ENCODE measurements at regions of chr12 and their contacts with region 1.

Region 1: GRCh38 chr12:57063991-57064685 is 14.2 kb upstream of the MYO1A start:
- DNase-seq: no peak
- H3K4me3 ChIP-seq: no peak overlapping the region
- H3K27ac ChIP-seq: peak overlapping the region in 1 of 2 experiments; percentile 10; a peak in 1 of 4 replicates
- H3K4me1 ChIP-seq: peaks cover 0 to 7% of the 10 kb centered on the region in 2 experiments; a peak in 1 of 4 replicates
- H3K27me3 ChIP-seq: no peaks in the 10 kb centered on the region
- CTCF ChIP-seq: no peak
- EP300 ChIP-seq: no peak
- RAD21 ChIP-seq: no peak

Region 2: GRCh38 chr12:57005980-57006808 is 57.9 kb before region 1 on chr12 and contains the start of gene ZBTB39:
- CTCF ChIA-PET with region 1: interaction called, 257 read pairs
- POLR2A ChIA-PET with region 1: interaction called, 3 read pairs
- DNase-seq: peak; percentile 99
- H3K4me3 ChIP-seq: peak within 1 kb of the TSS; percentile 89 to 100
- H3K27ac ChIP-seq: peak within 1 kb of the TSS; percentile 34 to 69; a peak in 2 of 4 replicates
- H3K4me1 ChIP-seq: peaks cover 6 to 14% of the 10 kb centered on the region in 2 experiments; a peak in 3 of 4 replicates
- H3K27me3 ChIP-seq: no peaks in the 10 kb centered on the region
- CTCF ChIP-seq: peak; percentile 69
- EP300 ChIP-seq: no peak
- RAD21 ChIP-seq: no peak
- polyA plus RNA-seq, gene ZBTB39: 3.7 and 4.8 TPM in 2 replicates

Region 3: DNA sequence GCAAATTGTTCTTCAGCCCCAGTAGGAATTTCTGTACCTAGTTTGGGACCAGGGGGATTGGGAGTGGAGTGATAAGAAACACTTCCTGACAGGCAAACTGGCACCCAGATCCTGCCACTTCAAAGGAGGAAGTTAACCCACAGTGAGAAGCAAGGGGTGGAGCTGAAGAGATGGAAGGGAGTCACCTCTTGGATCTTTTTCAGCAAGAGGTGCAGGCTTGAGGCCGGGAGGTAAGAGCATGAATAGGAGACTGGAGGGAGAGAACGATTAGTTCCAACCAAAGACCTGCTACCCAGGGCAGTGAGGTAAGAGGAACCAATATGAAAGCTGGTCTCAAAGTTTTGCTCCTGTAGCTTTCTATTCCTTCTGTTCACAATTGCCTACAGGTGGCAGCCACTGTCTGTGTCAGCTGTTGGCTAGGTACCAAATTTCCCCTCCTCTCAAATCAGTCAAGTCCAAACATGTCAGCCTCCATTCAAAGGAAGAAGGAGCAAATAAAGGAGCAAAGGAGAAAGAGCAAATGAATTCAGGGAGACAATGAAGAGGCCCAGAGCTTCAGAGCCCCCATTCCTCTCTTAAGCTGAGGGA is 32.9 kb before region 1 on chr12:
- CTCF ChIA-PET with region 1: interaction called, 20 read pairs
- POLR2A ChIA-PET with region 1: no interaction called
- DNase-seq: no peak
- H3K4me3 ChIP-seq: no peak overlapping the region
- H3K27ac ChIP-seq: no peak overlapping the region
- H3K4me1 ChIP-seq: peaks cover 0 to 48% of the 10 kb centered on the region in 2 experiments; a peak in 2 of 4 replicates
- H3K27me3 ChIP-seq: peaks cover 5% of the 10 kb centered on the region; the same call in 1 of the 2 replicates
- CTCF ChIP-seq: no peak
- EP300 ChIP-seq: no peak
- RAD21 ChIP-seq: peak; percentile 43

Region 4: DNA sequence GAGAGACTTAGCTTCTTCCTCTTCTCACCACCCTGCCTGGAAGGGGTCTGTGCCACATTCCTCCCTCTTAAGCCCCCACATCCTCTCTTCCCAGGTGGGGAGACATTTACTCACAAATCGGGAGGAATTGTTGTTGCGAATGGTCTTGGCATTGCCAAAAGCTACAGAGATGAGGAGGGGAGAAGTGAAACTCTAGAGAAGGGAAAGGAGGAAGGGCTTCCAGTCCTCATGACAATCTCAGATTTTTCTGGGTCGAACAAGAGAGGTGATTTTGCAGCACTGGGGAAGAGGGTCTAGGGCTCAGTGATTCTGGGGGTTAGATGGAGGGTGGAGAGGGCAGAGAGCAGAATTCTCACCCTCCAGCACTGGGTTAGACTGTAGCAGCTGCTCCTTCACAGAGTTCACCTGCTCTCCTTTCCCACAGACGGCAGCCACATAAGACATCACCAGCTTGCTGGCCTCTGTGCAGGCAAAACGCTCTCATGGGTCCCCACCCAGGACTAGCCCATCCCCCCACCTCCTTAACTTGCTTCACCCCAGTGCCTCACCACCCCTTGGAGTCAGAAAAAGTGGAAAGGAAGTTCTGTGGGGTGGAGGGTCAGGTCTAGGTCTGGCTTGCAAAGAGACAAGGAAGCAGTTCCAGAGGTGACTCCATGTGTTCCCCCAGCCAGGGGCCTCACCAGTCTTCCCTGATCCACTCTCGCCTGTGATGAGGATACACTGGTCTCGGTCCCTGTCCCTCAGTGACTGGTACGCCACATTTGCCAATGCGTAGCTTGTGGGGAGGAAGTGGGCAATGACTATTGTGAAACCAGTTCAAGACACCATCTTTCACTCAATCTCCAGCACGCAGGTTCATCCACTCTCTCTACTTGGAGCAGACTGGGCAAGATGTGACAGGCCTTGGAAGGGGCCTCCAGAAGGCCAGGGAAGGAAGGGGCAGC is 16.9 kb before region 1 on chr12:
- CTCF ChIA-PET with region 1: interaction called, 81 read pairs
- POLR2A ChIA-PET with region 1: no interaction called
- DNase-seq: no peak
- H3K4me3 ChIP-seq: no peak overlapping the region
- H3K27ac ChIP-seq: no peak overlapping the region
- H3K4me1 ChIP-seq: no peaks in the 10 kb centered on the region
- H3K27me3 ChIP-seq: no peaks in the 10 kb centered on the region; the same call in 1 of the 2 replicates
- CTCF ChIP-seq: no peak
- EP300 ChIP-seq: no peak
- RAD21 ChIP-seq: no peak

Region 5: DNA sequence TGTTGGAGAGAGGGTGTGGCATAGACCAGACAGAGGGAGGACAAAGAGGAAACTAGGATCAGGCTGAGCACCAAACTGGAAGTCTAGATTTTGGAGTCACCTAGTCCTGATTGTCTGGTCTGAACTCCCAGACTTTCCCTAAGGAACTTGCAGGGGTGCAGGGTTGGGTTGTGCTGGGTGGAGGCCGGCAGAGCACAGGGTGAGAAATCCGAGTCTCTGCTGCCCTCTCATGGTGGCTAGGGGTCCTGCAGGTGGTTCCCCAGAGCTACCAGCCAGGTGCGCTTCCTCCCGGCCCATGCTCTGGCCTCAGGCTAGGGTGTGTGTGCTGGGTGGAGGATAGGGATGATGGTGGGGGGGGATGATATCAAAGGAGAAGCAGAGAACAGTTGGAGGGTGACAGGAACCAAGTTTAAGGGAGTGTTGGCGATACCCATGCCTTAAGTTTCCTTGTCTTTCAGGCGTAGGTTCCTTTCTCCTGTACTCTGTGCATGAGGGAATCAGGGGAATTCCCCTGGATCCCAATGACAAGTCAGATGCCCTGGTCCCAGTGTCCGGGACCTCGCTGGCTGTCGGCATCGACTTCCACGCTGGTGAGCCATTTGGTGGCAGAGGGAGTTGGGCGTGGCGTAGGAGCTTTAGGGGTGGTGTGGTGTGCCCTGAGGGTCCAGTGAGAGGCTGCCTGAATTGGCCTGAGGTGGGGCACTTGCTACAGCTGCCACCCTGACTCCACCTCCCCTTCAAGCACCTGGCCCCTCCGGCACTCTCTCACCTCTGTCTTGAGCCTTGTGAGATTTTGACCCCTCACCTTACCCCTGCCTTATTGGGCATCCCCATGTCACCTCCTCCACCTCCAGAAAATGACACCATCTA is 119.0 kb after region 1 on chr12:
- CTCF ChIA-PET with region 1: interaction called, 14 read pairs
- POLR2A ChIA-PET with region 1: no interaction called
- DNase-seq: peak; percentile 96
- H3K4me3 ChIP-seq: no peak overlapping the region
- H3K27ac ChIP-seq: no peak overlapping the region
- H3K4me1 ChIP-seq: no peaks in the 10 kb centered on the region
- H3K27me3 ChIP-seq: no peaks in the 10 kb centered on the region
- CTCF ChIP-seq: peak; percentile 87
- EP300 ChIP-seq: no peak
- RAD21 ChIP-seq: peak; percentile 90